ENCODE measurements at regions of chr3 and their contacts with region 1.

Region 1: DNA sequence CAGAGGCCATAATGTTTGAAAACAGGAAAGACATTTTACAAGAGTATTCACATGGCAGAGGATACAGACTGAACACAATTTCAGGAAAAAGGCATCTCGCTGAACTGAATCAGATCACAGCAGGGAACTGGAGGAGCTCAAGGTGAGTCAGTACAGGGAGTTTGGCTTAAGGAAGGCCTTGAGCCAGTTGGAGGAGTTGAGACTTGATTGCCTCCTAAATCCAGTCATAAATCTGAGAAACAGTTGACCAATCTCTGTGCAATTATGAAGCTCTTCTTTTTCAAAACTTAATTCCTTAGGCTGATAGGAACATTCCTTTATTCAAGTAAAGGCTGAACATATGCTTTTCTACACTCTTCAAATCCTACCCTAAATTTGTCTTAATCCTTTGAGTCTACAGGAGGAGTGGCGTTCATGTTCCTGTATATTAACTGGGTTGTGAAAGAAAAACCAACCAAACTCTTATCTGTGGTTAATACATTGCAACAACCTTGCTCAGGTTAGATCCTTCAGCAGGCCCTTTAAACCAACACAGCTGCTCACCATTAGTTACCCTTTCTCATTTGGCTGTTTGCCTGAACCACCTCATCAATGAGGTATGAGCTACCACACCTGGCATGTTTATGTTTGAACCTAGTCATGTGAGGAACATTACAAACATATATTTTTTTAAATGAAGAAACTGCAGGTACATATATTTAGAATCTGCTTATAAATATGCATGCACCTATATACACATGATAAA is 404.1 kb upstream of the ATP11B start:
- DNase-seq: no peak
- H3K4me3 ChIP-seq: no peak overlapping the region
- H3K27ac ChIP-seq: no peak overlapping the region
- H3K4me1 ChIP-seq: no peaks in the 10 kb centered on the region
- H3K27me3 ChIP-seq: no peaks in the 10 kb centered on the region
- CTCF ChIP-seq: no peak
- POLR2A ChIP-seq: no peak

Region 2: DNA sequence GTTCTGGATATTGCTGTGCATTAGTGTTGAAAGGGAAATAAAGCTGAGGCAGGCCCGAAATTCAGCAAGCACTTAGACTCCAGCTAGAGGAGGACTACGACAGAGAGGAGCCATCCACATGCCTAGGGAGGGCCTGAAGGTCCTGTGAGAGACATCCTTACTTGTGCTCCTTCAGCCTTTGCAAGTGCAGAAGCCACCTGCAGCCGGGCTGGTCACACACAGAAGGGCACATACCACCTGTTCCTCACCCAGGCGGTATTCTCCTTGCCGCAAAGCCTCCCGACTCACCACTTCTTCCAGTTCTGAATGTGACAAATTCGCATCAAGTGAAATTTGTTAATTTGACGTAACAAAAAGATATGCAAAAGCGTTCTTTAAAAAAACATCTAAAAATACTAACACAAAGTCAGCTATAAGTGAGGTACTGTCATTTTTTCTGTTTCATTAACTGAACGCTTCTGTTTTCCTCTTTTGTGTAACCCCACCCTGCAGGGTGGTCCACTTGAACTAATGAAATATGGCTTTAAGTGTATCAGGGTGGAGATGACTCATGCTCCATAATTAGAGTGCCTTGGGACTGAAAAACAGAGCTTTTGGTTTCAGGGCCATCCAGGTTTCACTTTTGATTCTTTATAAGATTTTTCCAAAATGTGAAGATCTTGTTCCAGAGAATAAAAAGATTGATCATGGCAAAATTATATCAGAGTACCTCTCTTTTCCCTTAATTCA is 63.9 kb before region 1 on chr3:
- intact Hi-C with region 1: no loop called
- DNase-seq: no peak
- H3K4me3 ChIP-seq: no peak overlapping the region
- H3K27ac ChIP-seq: no peak overlapping the region
- H3K4me1 ChIP-seq: no peaks in the 10 kb centered on the region
- H3K27me3 ChIP-seq: no peaks in the 10 kb centered on the region
- CTCF ChIP-seq: no peak
- POLR2A ChIP-seq: no peak

Region 3: GRCh38 chr3:183435661-183436060 is 1046.4 kb after region 1 on chr3:
- intact Hi-C with region 1: loop called (anchors 5 kb)
- DNase-seq: no peak
- H3K4me3 ChIP-seq: no peak overlapping the region
- H3K27ac ChIP-seq: no peak overlapping the region
- H3K4me1 ChIP-seq: no peaks in the 10 kb centered on the region
- H3K27me3 ChIP-seq: no peaks in the 10 kb centered on the region
- CTCF ChIP-seq: no peak
- POLR2A ChIP-seq: no peak